Activated T-helper 1 cell treated with anti-CD3 and anti-CD28 coated beads, Interleukin-12 subunit alpha, Interleukin-12 subunit beta, Interleukin-2, Interleukin-4 antibody, amounts not matched to agents 30 ng/mL and 10 ng/mL and 1 ng/mL, durations not matched to agents 14 hours and 24 hours and 36 hours (primary cell): ENCODE measurements at regions of chr9 and their contacts with region 1.

Region 1: DNA sequence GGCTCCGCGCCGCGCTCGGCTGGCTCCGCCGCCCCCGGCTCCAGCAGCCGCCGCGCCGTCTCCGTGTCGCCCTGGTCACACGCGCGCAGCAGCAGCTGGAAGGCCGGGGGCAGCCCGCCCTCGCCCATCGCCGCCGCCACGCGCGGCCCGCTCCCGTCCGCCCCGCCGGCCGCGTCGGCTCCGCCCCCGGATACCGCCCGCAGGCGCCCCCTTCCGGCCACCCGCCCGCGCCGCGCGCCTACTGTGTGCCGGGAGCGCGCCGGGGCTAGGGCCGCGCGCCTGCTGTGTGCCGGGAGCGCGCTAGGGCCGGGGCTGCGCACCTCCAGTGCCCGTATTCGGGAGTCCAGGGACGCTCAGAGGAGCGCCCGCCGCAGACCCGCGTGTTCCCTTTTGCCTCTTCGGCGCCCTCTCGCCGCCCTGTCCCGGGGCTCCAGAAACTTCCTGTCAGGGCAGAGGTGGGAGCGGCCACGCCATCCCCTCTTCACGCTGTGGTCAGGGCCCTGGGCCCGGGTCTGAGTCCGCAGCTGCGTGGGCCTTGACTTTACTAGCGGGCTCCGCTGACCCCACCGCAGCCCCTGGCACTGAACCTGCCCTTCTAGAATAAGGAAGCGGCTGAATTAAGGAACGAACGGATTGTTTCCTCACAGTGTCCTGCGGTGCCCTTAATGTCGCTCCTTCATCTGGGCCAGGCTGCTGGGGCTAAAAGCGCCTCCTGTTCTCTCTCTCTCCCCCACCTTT is at the start of gene ANKS6:
- DNase-seq: peak; percentile 81
- H3K4me3 Mint-ChIP-seq: peak within 1 kb of the TSS; percentile 84
- H3K27ac Mint-ChIP-seq: peak within 1 kb of the TSS; percentile 64
- H3K4me1 Mint-ChIP-seq: peaks cover 16% of the 10 kb centered on the region
- H3K27me3 Mint-ChIP-seq: peaks cover 20% of the 10 kb centered on the region
- total RNA-seq, gene ANKS6: 10.6 and 11.1 TPM in 2 replicates

Region 2: GRCh38 chr9:98807070-98807810 is 10.7 kb after region 1 on chr9 and contains the start of gene GALNT12:
- intact Hi-C with region 1: loop called (anchors 1 kb)
- DNase-seq: peak; percentile 21
- H3K4me3 Mint-ChIP-seq: peak within 1 kb of the TSS; percentile 86
- H3K27ac Mint-ChIP-seq: no peak within 1 kb of the TSS
- H3K4me1 Mint-ChIP-seq: peaks cover 12% of the 10 kb centered on the region
- H3K27me3 Mint-ChIP-seq: peaks cover 57% of the 10 kb centered on the region
- total RNA-seq, gene GALNT12: 2.3 and 2.5 TPM in 2 replicates